ENCODE measurements at regions of chr11 and their contacts with region 1.

Region 1: DNA sequence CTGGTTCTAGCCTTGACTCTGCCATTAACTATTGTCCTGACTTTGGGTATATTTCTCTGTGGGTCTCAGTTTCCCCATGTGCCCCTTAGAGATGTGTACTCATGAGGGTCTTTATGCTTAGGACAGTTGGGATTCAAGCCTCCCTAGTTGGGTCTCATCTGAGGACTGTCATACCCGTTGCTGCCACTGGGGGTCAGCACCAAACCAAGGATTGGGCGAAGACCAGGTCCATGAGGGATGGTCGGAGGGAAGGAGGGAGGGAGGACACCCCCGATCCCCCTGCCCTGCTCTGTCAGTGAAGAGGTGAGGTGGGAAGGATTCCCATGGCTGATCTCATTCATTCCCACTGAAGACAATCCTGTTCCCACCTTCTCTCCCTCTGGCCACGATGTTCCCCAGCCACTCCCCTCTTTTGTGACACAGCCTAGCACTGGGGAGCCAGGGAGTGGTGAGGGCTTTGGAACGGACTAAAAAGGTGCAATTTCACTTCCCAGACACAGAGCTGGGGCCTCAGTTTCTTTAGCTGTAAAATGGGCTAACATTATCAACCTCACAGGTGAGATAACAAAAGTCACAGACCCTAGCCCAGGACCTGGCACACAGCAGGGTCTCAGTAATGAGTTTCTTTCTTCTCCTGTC is 12.4 kb upstream of the KLHL35 start:
- DNase-seq: peak; percentile 43 to 91 (median 70)
- ATAC-seq: peak; percentile 75 to 91 (median 88)
- H3K4me3 ChIP-seq: no peak overlapping the region
- H3K27ac ChIP-seq: no peak overlapping the region
- H3K4me1 ChIP-seq: no peaks in the 10 kb centered on the region
- H3K27me3 ChIP-seq: no peaks in the 10 kb centered on the region
- CTCF ChIP-seq: peak; percentile 84 to 91 (median 88)

Region 2: GRCh38 chr11:75399344-75400145 is 45.9 kb before region 1 on chr11 and contains the start of gene RPS3:
- intact Hi-C with region 1: loop called in 1 of 3 experiments (anchors 10 kb)
- DNase-seq: peak; percentile 86 to 96 (median 90)
- ATAC-seq: peak; percentile 97 to 98 (median 97)
- H3K4me3 ChIP-seq: peak within 1 kb of the TSS; percentile 55 to 88 (median 68)
- H3K27ac ChIP-seq: peak within 1 kb of the TSS; percentile 56 to 88 (median 82)
- H3K4me1 ChIP-seq: peaks cover 12 to 25% (median 19%) of the 10 kb centered on the region in 3 donors
- H3K27me3 ChIP-seq: no peaks in the 10 kb centered on the region
- CTCF ChIP-seq: no peak
- total RNA-seq, gene RPS3: 824 to 1,938 (median 1,523) TPM

Region 3: DNA sequence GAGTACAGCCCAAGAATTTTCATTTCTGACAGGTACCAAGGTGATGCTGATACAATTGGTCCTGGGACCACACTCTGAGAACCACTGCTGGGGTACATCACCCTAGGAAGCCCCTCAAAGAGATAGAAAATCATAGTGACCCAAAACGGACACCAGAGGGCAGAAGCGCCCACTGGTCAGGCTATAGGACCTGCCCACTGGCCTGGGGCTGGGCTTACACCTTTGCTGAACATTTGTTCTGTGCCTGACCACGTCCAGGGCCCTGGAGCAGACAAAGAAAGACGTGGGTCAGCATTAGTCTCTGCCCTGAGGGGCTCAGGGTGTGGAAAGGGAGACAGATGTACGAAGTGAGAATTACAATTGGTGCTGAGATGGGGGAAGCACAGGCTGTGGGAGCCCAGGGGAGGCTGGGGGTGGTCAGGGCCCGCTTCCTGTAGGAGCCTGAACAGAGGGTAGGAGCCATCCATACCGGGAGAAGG is 102.2 kb after region 1 on chr11:
- intact Hi-C with region 1: no loop called
- DNase-seq: peak in 4 of 6 donors; percentile 36 to 80 (median 62)
- ATAC-seq: peak; percentile 78 to 97 (median 92)
- H3K4me3 ChIP-seq: no peak overlapping the region
- H3K27ac ChIP-seq: no peak overlapping the region
- H3K4me1 ChIP-seq: no peaks in the 10 kb centered on the region
- H3K27me3 ChIP-seq: no peaks in the 10 kb centered on the region
- CTCF ChIP-seq: peak; percentile 65 to 72 (median 67)